GM10248 (cell line): ENCODE measurements at regions of chr3 and their contacts with region 1.

Region 1: DNA sequence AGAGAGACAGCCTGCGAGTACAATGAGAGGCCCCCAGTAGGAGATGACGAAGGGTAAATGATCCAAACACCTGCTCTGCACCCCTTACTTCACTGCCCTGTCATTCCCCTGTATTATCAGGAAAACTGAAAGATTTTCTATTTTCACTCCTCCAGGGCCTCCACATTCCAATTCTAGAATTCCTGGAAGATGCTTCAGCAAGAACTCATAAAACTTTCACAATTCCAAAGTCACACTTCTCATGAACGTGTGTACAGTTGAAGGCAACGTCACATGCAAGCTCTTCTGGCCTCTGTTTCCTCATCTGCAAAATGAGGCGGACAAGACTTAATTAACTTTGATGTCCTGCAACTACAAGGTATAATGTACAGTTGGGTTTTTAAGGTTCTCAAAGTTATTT is 62.8 kb upstream of the SPATA12 start:
- DNase-seq: no peak
- CTCF ChIP-seq: no peak

Region 2: GRCh38 chr3:56980798-56981390 is 16.8 kb before region 1 on chr3:
- CTCF ChIA-PET with region 1: interaction called, 46 read pairs
- POLR2A ChIA-PET with region 1: no interaction called
- DNase-seq: no peak
- CTCF ChIP-seq: no peak

Region 3: GRCh38 chr3:57007513-57008460 is 10.1 kb after region 1 on chr3:
- CTCF ChIA-PET with region 1: interaction called, 42 read pairs
- POLR2A ChIA-PET with region 1: no interaction called
- DNase-seq: no peak
- CTCF ChIP-seq: no peak

Region 4: GRCh38 chr3:57094575-57094974 is 96.9 kb after region 1 on chr3:
- CTCF ChIA-PET with region 1: interaction called, 11 read pairs
- POLR2A ChIA-PET with region 1: no interaction called
- DNase-seq: no peak
- CTCF ChIP-seq: no peak